GM12878 (cell line): ENCODE measurements at regions of chr13 and their contacts with region 1.

Region 1: DNA sequence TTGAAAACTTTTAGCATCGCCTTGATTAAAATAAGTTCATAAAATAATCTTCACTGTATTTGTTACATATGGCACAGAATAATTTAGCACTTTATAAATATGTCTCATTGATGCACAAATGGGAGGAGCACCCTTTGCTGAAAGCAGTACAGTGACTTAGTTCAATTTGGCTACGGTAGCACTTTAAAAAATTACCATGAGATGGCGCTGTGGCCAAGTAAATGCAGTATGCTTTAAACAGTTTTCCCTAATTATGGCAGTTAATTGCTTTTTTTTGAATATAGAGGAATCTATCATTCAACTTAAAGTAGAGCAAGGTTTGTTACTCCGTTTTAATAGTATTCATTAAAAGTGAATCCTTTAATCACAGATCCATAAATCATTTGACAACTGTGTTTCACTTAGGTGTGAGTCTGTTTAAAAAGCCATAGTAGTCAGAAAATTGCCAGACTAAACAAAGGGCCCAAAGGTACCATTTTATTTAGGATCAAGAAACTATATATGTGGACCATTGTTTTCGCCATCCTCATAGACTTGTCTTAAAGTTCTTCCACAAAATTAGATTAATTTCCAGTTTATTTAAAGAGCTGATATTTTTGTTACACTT is 34.7 kb upstream of the ESD start:
- DNase-seq: no peak
- ATAC-seq: peak; percentile 78
- H3K4me3 ChIP-seq: no peak overlapping the region
- H3K27ac ChIP-seq: no peak overlapping the region
- H3K4me1 ChIP-seq: no peaks in the 10 kb centered on the region
- H3K27me3 ChIP-seq: no peaks in the 10 kb centered on the region
- CTCF ChIP-seq: peak; percentile 51 to 82 (median 72)
- EP300 ChIP-seq: no peak
- POLR2A ChIP-seq: no peak
- RAD21 ChIP-seq: peak; percentile 84

Region 2: DNA sequence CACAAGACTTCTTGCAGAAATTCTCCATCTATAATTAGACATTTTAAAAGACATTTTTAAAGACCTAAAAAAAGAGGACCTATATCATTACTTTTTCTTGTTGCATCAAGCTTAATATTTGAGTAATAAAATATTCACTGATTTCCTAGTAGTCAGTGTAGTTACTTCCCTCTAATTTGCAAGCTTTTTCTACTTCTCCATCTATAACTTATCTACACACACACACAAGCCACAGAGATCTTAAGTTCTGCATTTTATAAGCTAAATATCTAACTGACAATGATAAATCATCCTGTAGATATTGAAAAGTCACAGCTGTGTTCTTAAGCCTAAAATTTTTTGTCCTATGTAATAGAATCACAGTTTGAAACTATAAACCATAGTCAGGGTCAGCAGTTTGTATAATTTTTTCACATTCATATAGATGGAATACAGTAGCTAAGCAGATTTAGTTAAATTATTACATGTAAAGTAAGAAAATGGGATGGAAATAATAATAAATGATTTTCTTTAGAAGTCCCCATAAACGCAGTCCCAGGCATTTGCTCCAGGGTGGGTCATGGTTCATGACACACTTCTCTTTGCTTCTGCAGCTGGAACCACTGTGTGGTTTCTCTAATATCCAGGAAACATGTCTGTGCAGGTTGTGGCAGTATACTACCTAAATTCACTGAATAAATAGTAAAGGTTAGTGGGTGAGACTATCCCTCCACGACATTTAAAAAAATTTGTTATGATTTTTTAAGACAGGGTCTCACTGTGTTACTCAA is 95.0 kb before region 1 on chr13:
- CTCF ChIA-PET with region 1: no interaction called
- POLR2A ChIA-PET with region 1: no interaction called
- RAD21 ChIA-PET with region 1: no interaction called
- SMC1A ChIA-PET with region 1: no interaction called
- in situ Hi-C with region 1: no loop called
- intact Hi-C with region 1: no loop called
- DNase-seq: no peak
- ATAC-seq: no peak
- H3K4me3 ChIP-seq: no peak overlapping the region
- H3K27ac ChIP-seq: no peak overlapping the region
- H3K4me1 ChIP-seq: no peaks in the 10 kb centered on the region
- H3K27me3 ChIP-seq: no peaks in the 10 kb centered on the region
- CTCF ChIP-seq: no peak
- EP300 ChIP-seq: no peak
- POLR2A ChIP-seq: no peak
- RAD21 ChIP-seq: no peak

Region 3: GRCh38 chr13:46761853-46762252 is 69.8 kb before region 1 on chr13:
- CTCF ChIA-PET with region 1: no interaction called
- POLR2A ChIA-PET with region 1: no interaction called
- RAD21 ChIA-PET with region 1: no interaction called
- SMC1A ChIA-PET with region 1: no interaction called
- in situ Hi-C with region 1: no loop called
- intact Hi-C with region 1: no loop called
- DNase-seq: no peak
- ATAC-seq: no peak
- H3K4me3 ChIP-seq: no peak overlapping the region
- H3K27ac ChIP-seq: no peak overlapping the region
- H3K4me1 ChIP-seq: no peaks in the 10 kb centered on the region
- H3K27me3 ChIP-seq: no peaks in the 10 kb centered on the region
- CTCF ChIP-seq: no peak
- EP300 ChIP-seq: no peak
- POLR2A ChIP-seq: no peak
- RAD21 ChIP-seq: no peak

Region 4: DNA sequence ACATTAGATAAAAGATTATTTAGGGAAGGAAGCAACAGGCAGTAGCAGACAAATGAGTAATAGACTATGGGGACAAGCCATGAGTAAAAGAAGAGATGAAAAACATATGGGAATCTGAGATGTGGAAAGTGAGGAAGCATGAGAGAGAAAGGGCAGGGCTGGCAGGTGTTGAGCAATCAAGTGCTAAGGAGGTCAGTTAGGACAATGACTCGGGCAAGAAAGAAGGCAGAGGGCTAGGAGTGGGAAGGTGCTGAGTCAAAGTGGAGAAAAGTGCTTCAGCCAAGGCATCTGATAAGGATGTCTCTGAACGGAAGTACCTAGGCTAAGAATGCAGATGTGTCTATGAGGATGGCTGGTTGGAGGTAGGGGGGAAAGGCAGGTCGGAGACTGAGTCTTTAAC is 357.1 kb after region 1 on chr13:
- CTCF ChIA-PET with region 1: no interaction called
- POLR2A ChIA-PET with region 1: no interaction called
- RAD21 ChIA-PET with region 1: no interaction called
- SMC1A ChIA-PET with region 1: no interaction called
- in situ Hi-C with region 1: no loop called
- intact Hi-C with region 1: no loop called
- DNase-seq: no peak
- ATAC-seq: no peak
- H3K4me3 ChIP-seq: no peak overlapping the region
- H3K27ac ChIP-seq: no peak overlapping the region
- H3K4me1 ChIP-seq: no peaks in the 10 kb centered on the region
- H3K27me3 ChIP-seq: no peaks in the 10 kb centered on the region
- CTCF ChIP-seq: no peak
- EP300 ChIP-seq: no peak
- POLR2A ChIP-seq: no peak
- RAD21 ChIP-seq: no peak

Region 5: DNA sequence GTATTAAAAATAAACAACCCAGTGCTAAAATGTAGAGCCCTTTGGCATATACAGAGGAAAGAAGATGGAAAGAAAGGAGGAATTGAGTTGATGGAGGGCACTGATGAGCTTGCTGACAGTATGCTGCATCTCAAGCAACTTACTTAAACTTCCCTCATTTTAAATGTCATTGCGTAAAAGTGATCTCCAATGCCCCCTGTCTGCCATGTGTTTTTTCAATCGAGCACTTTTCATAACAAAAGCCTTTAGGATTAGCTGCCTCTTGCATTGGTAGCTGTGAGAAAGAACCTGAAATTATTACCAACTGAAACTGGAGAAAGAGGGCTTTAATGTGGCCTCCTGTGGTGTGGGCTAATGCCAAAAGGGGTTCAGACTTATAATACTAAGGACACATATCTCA is 627.8 kb after region 1 on chr13:
- CTCF ChIA-PET with region 1: no interaction called
- POLR2A ChIA-PET with region 1: no interaction called
- RAD21 ChIA-PET with region 1: no interaction called
- SMC1A ChIA-PET with region 1: no interaction called
- in situ Hi-C with region 1: no loop called
- intact Hi-C with region 1: loop called (anchors 10 kb)
- DNase-seq: no peak
- ATAC-seq: no peak
- H3K4me3 ChIP-seq: no peak overlapping the region
- H3K27ac ChIP-seq: no peak overlapping the region
- H3K4me1 ChIP-seq: no peaks in the 10 kb centered on the region
- H3K27me3 ChIP-seq: no peaks in the 10 kb centered on the region
- CTCF ChIP-seq: peak in 2 of 3 experiments; percentile 7 to 31; a peak in 2 of 6 replicates
- EP300 ChIP-seq: no peak
- POLR2A ChIP-seq: no peak
- RAD21 ChIP-seq: peak; percentile 43

Region 6: GRCh38 chr13:47598340-47598911 is 766.7 kb after region 1 on chr13:
- CTCF ChIA-PET with region 1: no interaction called
- POLR2A ChIA-PET with region 1: no interaction called
- RAD21 ChIA-PET with region 1: no interaction called
- SMC1A ChIA-PET with region 1: no interaction called
- in situ Hi-C with region 1: no loop called
- intact Hi-C with region 1: loop called (anchors 1 kb)
- DNase-seq: no peak
- ATAC-seq: no peak
- H3K4me3 ChIP-seq: no peak overlapping the region
- H3K27ac ChIP-seq: no peak overlapping the region
- H3K4me1 ChIP-seq: no peaks in the 10 kb centered on the region
- H3K27me3 ChIP-seq: no peaks in the 10 kb centered on the region
- CTCF ChIP-seq: peak in 2 of 3 experiments; percentile 13 to 25; a peak in 1 of 6 replicates
- EP300 ChIP-seq: no peak
- POLR2A ChIP-seq: no peak
- RAD21 ChIP-seq: peak; percentile 34; the same call in 1 of the 2 replicates